ENCODE measurements at regions of chr2 and their contacts with region 1.

Region 1: GRCh38 chr2:147937744-147938349 is 82.7 kb downstream of the ORC4 start:
- DNase-seq: no peak
- ATAC-seq: peak; percentile 80
- H3K4me3 ChIP-seq: no peak overlapping the region
- H3K4me1 ChIP-seq: no peaks in the 10 kb centered on the region
- CTCF ChIP-seq: peak; percentile 67

Region 2: GRCh38 chr2:147449323-147449991 is 488.4 kb before region 1 on chr2:
- intact Hi-C with region 1: no loop called
- DNase-seq: no peak
- ATAC-seq: peak; percentile 19
- H3K4me3 ChIP-seq: no peak overlapping the region
- H3K4me1 ChIP-seq: no peaks in the 10 kb centered on the region
- CTCF ChIP-seq: no peak

Region 3: GRCh38 chr2:148509288-148509902 is 571.5 kb after region 1 on chr2:
- intact Hi-C with region 1: loop called in 1 of 2 experiments (anchors 5 kb)
- DNase-seq: peak; percentile 81 to 90 (median 88)
- ATAC-seq: peak; percentile 100
- H3K4me3 ChIP-seq: no peak overlapping the region
- H3K4me1 ChIP-seq: no peaks in the 10 kb centered on the region
- CTCF ChIP-seq: peak; percentile 77

Region 4: GRCh38 chr2:148989882-148990493 is 1052.1 kb after region 1 on chr2:
- intact Hi-C with region 1: loop called in 1 of 2 experiments (anchors 5 kb)
- DNase-seq: peak in 1 of 3 donors; percentile 83
- ATAC-seq: peak; percentile 85
- H3K4me3 ChIP-seq: no peak overlapping the region
- H3K4me1 ChIP-seq: no peaks in the 10 kb centered on the region
- CTCF ChIP-seq: peak; percentile 27

Measured in mucosa of descending colon (tissue), 3 donors.